ENCODE measurements at regions of chr10 and their contacts with region 1.

Region 1: GRCh38 chr10:35949811-35950211 is 307.7 kb upstream of the FZD8 start:
- DNase-seq: no peak
- ATAC-seq: no peak
- H3K4me3 ChIP-seq: no peak overlapping the region
- H3K27ac ChIP-seq: no peak overlapping the region
- H3K4me1 ChIP-seq: no peaks in the 10 kb centered on the region
- H3K27me3 ChIP-seq: no peaks in the 10 kb centered on the region

Region 2: GRCh38 chr10:35898716-35899440 is 50.9 kb before region 1 on chr10:
- intact Hi-C with region 1: no loop called
- DNase-seq: no peak
- ATAC-seq: no peak
- H3K4me3 ChIP-seq: no peak overlapping the region
- H3K27ac ChIP-seq: no peak overlapping the region
- H3K4me1 ChIP-seq: no peaks in the 10 kb centered on the region
- H3K27me3 ChIP-seq: no peaks in the 10 kb centered on the region

Region 3: DNA sequence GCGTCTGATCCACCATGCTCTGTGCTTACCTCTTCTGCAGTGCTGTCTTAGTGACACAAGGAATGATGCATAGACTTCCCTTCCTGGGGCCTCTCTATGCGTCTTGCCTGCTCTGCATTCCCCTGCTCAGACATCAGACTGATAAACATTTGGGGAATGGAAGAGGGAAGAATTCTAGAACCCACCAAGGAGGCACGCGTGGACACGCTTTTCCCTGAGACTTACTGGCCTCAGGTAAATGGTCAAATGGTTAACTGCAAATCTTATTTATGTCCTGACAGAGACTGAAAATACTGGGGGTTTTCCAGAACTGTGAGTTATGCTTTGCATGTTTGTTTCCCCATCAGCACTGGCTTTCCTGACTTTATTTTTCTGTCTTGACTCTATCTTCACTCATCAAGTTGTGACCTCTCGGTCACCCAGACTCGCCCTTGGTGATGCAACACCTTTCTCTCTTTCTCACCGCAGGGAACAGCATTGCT is 21.8 kb before region 1 on chr10:
- intact Hi-C with region 1: loop called in 1 of 2 experiments (anchors 2 kb)
- DNase-seq: no peak
- ATAC-seq: no peak
- H3K4me3 ChIP-seq: no peak overlapping the region
- H3K27ac ChIP-seq: no peak overlapping the region
- H3K4me1 ChIP-seq: no peaks in the 10 kb centered on the region
- H3K27me3 ChIP-seq: no peaks in the 10 kb centered on the region